ENCODE measurements at regions of chr9 and their contacts with region 1.

Region 1: DNA sequence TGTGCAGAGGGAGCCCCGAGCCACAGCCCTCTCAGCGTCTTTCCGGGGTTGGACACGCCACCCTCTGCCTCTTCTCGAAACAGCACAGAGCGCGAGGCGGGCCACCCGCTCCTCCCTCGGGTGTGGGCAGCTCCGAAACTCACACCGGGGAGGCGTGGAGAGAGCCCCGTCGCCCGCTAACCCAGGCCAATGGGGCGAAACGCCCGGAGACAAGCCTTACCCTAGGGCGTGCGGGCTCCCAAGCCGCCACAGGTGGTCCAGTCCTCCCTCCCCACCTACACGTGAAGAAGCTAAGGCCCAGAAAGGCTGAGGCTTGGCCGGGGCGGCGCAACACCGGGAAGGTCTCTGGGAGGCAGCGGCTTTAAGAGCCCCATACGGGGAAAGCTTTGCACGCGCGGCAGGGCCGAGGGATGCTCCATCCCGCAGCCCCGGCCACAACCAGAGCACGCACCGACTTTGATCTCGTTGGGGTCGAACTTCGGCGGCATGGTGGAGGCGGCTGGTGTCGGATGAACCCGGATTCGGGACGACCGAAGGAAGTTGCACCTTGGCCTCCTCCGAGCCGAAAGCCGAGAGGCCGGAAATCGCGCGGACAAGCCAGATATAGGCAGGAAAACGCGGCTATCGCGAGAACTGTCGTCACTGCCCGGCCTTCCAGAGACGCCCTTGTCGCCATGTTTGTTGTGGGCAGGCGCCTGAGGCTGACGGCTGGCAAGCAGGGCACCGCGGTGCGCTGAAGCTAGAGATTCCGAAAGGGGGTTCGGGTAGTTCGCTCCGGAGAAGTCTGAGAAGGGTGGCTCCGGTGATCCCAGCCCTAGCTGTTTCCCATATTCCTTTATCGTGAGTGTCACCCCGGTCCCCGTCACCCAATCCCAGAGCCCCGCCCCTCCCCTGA is at the starts of genes LRSAM1 and RPL12:
- DNase-seq: peak; percentile 94 to 99 (median 97)

Region 2: DNA sequence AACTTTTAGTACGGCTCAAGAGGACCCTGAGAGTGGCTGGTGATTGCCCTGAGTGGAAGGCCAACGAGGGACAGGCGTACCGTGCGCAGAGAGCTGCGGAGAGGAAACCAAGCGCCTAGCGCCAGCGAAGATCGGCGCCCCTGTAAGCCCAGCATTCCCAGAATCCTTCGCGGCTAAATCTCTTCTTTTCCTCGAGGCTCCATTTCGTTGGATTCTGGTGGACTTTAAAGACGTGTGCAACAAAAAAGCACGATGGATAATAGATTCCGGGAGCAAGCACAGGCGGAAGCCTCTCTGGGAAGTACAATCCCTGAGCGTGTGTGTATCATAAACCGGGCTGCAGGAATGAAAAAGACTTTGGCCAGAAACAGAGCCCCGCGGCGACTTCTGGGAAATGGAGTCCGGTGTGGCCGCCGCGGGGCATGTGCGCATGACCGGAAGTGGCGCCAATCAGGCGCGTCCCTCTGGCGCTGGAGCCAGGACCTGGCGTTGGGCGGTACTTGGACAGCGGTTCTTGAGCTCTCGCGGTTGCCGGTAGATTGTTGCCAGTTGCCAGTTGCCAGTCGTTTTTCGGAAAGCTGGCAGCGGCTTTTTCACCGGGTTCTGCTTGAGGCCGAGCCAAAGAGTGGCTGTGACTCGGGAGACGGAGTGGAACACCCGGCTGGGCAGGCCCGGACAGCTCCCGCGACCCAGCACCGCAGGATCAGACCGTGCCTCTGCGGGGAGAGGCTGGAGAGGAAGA is 27.0 kb before region 1 on chr9 and contains the start of gene ZNF79:
- intact Hi-C with region 1: loop called (anchors 1 kb)
- DNase-seq: peak; percentile 88 to 99 (median 92)

Measured in posterior cingulate gyrus (tissue), 11 donors.